IMR-90 (cell line): ENCODE measurements at regions of chr13 and their contacts with region 1.

Region 1: DNA sequence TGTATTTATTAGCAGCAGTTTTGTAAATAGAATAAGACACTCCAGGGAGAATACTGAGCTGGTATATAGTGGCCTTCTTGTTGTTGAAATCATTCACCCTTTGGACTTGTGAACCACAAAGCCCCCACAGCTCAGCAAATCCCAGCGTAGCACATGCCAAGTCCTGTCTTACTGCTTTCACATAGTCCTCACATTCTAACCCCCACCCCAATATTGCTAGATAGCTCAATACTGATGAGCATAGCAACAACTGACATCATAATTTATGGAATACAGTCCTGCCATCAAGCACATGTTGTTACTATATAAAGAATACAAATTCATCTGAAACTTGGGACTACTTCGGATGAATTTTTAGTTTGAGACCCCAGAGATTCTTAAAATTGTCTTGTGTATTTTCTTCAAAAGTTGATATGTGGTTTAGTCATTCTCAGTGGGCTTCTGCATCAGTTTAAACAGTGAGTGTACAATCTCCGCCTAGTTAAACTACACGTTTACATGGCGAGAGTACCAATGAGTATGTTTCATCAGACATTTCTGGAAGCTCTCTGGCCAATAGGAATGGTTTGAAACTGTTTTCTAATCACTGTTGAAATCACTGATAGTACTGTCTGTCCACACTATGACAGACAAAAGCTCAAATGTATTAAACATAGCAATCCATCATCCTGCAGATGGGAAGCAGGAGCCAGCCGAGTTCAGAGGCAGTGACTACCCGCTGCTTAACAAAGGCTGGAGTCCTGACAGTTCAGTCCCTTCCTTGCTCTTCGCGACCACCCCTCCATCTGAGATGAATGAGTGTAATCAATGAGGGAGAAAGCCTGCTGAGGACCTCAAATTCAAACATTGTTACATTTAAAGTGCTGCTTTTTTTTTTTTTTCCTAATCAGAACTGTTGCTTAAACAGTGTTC is 15.2 kb downstream of the DACH1 start:
- DNase-seq: no peak
- ATAC-seq: no peak
- H3K4me3 ChIP-seq: no peak overlapping the region
- H3K27ac ChIP-seq: no peak overlapping the region
- H3K4me1 ChIP-seq: no peaks in the 10 kb centered on the region
- H3K27me3 ChIP-seq: no peaks in the 10 kb centered on the region
- CTCF ChIP-seq: no peak
- POLR2A ChIP-seq: no peak
- RAD21 ChIP-seq: no peak

Region 2: GRCh38 chr13:71464686-71465085 is 387.1 kb before region 1 on chr13:
- CTCF ChIA-PET with region 1: no interaction called
- POLR2A ChIA-PET with region 1: interaction called, 12 read pairs
- dilution Hi-C with region 1: no loop called
- in situ Hi-C with region 1: no loop called
- intact Hi-C with region 1: no loop called
- DNase-seq: no peak
- ATAC-seq: no peak
- H3K4me3 ChIP-seq: no peak overlapping the region
- H3K27ac ChIP-seq: no peak overlapping the region
- H3K4me1 ChIP-seq: no peaks in the 10 kb centered on the region
- H3K27me3 ChIP-seq: no peaks in the 10 kb centered on the region
- CTCF ChIP-seq: no peak
- POLR2A ChIP-seq: no peak
- RAD21 ChIP-seq: no peak